Activated naive CD4-positive, alpha-beta T cell treated with anti-CD3 and anti-CD28 coated beads for 36 hours (primary cell): ENCODE measurements at regions of chr9 and their contacts with region 1.

Region 1: GRCh38 chr9:135907431-135908092 is at the start of gene CAMSAP1:
- DNase-seq: peak; percentile 94
- H3K4me3 Mint-ChIP-seq: peak within 1 kb of the TSS; percentile 80
- H3K27ac Mint-ChIP-seq: peak within 1 kb of the TSS; percentile 89
- H3K4me1 Mint-ChIP-seq: peaks cover 53% of the 10 kb centered on the region
- H3K27me3 Mint-ChIP-seq: no peaks in the 10 kb centered on the region
- total RNA-seq, gene CAMSAP1: 32.6 to 35.2 TPM

Region 2: DNA sequence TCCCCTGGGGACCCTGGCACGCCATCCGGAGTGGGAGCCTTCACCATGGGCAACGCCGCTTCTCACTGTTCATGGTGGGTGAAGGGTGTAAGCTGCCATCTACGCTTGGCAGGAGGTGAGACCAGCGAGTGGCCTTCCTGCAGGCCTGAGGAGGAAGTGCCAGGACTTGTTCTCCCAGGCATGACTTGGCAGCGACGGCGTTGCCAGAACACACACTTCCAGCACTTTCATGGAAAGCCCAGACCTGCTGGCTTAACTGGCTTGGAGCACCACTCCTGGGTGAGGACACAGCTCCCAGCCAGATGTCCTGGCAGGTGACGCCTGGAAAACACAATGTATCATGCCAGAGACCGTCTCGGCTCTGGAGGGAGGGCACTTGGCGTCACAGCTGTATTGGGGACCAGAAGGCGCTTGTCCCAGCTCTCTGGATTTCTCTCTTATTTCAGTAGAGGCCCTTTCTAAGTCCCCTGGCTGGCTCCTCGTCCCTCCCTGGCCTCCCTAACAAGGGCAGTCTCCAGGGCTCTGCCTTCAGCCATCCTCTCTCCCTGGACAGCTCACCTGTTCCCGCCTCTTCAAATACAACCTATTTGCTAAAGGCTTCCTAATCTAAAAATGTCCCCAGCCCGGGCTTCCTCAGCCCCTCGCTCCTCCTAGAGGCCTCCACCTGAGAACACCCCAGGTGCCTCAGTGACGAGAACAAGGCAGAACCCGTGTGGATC is 631.8 kb before region 1 on chr9:
- CTCF ChIA-PET with region 1: no interaction called
- intact Hi-C with region 1: no loop called
- DNase-seq: no peak
- H3K4me3 Mint-ChIP-seq: no peak overlapping the region
- H3K27ac Mint-ChIP-seq: no peak overlapping the region
- H3K4me1 Mint-ChIP-seq: no peaks in the 10 kb centered on the region
- H3K27me3 Mint-ChIP-seq: peaks cover 9% of the 10 kb centered on the region

Region 3: DNA sequence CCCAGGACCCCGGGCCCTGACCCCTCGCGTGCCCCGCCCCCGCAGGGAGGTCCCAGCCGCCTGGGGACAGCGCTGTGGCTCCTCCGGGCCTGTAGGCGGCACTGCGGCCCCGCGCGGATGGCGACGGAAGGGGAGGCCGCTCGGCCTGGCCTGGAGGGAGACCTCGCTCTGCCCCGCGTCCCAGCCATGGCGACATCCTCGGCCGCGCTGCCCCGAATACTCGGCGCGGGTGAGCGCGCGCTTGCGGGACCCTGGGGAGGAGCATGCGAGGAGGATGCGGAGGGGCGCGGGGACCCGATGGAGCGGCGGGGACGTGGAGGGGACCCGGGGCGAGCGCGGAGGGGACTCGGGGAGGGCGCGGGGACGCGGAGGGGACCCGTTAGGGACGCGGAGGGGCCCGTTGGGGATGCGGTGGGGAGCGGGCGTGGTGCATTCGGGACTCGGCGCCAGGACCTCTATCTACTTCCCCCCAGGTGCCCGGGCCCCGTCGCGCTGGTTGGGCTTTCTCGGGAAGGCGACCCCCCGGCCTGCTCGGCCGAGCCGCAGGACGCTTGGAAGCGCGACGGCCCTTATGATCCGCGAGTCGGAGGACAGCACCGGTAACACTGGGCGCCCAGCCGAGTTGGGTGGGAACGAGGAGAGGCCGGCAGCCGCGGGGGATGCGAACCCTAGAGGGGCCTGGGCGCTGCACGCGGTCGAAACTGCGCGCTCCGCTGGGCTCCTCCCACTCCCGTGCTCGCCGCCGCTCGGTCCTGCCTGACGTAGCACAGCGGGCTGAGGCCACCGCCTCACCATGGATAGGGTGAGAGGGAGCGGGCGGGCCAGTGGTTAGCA is 406.8 kb before region 1 on chr9 and contains the start of gene MRPS2:
- CTCF ChIA-PET with region 1: no interaction called
- intact Hi-C with region 1: loop called (anchors 5 kb)
- DNase-seq: peak; percentile 85
- H3K4me3 Mint-ChIP-seq: peak within 1 kb of the TSS; percentile 93
- H3K27ac Mint-ChIP-seq: peak within 1 kb of the TSS; percentile 93
- H3K4me1 Mint-ChIP-seq: peaks cover 26% of the 10 kb centered on the region
- H3K27me3 Mint-ChIP-seq: peaks cover 3% of the 10 kb centered on the region
- total RNA-seq, gene MRPS2: 36.9 to 40.7 TPM

Region 4: GRCh38 chr9:135887585-135888050 is 19.9 kb before region 1 on chr9:
- CTCF ChIA-PET with region 1: no interaction called
- intact Hi-C with region 1: loop called (anchors 1 kb)
- DNase-seq: peak; percentile 81
- H3K4me3 Mint-ChIP-seq: peak overlapping the region; percentile 61
- H3K27ac Mint-ChIP-seq: peak overlapping the region; percentile 54
- H3K4me1 Mint-ChIP-seq: peaks cover 60% of the 10 kb centered on the region
- H3K27me3 Mint-ChIP-seq: no peaks in the 10 kb centered on the region

Region 5: DNA sequence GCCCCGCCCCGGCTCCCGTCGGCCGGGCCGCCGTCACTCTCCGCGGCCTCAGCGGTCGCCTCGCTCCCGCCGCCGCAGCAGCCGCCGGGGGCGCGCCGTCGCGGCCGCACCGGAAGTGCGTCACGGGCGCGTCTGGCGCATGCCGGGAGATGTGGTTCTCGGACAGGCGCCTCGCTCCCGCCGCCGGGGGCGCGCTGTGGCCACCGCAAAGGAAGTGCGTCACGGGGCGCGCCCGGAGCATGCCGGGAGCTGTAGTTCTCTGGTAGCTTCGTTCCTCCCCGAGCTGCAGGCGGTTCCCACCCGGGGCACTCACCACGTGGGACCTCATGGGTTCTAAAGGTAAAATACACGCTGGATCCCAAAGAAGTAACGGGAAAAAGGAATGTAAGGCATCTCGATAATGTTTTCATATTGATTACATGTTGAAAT is 53.7 kb after region 1 on chr9 and contains the start of gene UBAC1:
- CTCF ChIA-PET with region 1: no interaction called
- intact Hi-C with region 1: loop called (anchors 1 kb)
- DNase-seq: peak; percentile 94
- H3K4me3 Mint-ChIP-seq: peak within 1 kb of the TSS; percentile 87
- H3K27ac Mint-ChIP-seq: peak within 1 kb of the TSS; percentile 50
- H3K4me1 Mint-ChIP-seq: peaks cover 32% of the 10 kb centered on the region
- H3K27me3 Mint-ChIP-seq: no peaks in the 10 kb centered on the region
- total RNA-seq, gene UBAC1: 37.2 to 40.0 TPM

Region 6: GRCh38 chr9:136539427-136540421 is 632.2 kb after region 1 on chr9:
- CTCF ChIA-PET with region 1: no interaction called
- intact Hi-C with region 1: loop called (anchors 5 kb)
- DNase-seq: peak; percentile 99
- H3K4me3 Mint-ChIP-seq: peak overlapping the region; percentile 80
- H3K27ac Mint-ChIP-seq: peak overlapping the region; percentile 100
- H3K4me1 Mint-ChIP-seq: peaks cover 70% of the 10 kb centered on the region
- H3K27me3 Mint-ChIP-seq: no peaks in the 10 kb centered on the region